Dendritic cell treated with granulocyte-macrophage colony-stimulating factor and Interleukin-4, amounts not matched to agents 40 ng/mL and 50 ng/mL, for 4 days (primary cell): ENCODE measurements at regions of chr1 and their contacts with region 1.

Region 1: DNA sequence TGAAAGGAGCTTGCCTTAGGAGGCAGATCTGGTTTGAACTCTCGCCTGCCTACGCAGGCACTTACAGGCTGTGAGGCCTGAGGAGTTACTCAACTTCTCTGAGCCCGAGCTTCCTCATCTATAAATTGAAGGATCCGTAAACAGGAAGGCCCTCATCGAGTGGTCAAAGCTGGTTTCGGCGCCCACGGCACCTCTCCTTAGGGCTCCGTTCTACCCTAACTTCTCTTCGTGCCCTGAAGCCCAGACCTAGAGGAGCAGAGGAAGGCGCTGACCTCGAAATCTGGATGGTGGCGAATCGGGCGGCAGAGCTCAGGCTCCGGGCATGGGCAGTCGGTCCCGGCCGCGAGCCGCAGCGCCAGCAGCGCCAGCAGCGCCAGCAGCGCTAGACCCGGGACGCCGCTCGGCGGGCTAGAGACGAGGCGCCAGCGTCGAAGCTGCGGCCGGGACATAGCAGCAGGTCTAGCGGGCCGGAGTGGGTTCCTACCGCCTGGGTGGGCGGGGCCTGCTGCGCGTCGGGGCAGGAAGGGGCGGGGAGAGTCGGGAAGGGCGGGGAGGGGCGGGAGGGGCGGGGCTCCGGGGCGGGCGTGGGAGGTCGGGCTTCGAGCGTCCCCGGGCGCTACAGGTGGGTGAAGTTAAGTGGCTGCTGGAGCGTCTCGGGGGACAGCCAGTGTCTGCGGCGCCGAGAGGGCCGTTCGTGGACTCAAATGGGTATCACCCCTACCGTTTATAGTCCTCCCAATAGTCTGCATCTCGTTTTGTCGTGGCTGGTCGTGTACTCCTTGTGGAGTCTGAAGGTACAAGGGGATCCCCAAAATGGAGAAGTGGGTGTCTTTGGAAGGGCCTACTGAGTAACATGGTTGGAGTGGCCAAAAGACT is at the start of gene CTBS:
- H3K4me3 Mint-ChIP-seq: peak within 1 kb of the TSS; percentile 97
- H3K27ac Mint-ChIP-seq: peak within 1 kb of the TSS; percentile 100
- H3K4me1 Mint-ChIP-seq: peaks cover 50% of the 10 kb centered on the region
- H3K27me3 Mint-ChIP-seq: no peaks in the 10 kb centered on the region

Region 2: GRCh38 chr1:84615790-84616189 is 41.6 kb after region 1 on chr1:
- intact Hi-C with region 1: loop called (anchors 1 kb)
- H3K4me3 Mint-ChIP-seq: no peak overlapping the region
- H3K27ac Mint-ChIP-seq: no peak overlapping the region
- H3K4me1 Mint-ChIP-seq: peaks cover 33% of the 10 kb centered on the region
- H3K27me3 Mint-ChIP-seq: no peaks in the 10 kb centered on the region